Heart right ventricle (tissue), 16 donors: ENCODE measurements at regions of chr22 and their contacts with region 1.

Region 1: DNA sequence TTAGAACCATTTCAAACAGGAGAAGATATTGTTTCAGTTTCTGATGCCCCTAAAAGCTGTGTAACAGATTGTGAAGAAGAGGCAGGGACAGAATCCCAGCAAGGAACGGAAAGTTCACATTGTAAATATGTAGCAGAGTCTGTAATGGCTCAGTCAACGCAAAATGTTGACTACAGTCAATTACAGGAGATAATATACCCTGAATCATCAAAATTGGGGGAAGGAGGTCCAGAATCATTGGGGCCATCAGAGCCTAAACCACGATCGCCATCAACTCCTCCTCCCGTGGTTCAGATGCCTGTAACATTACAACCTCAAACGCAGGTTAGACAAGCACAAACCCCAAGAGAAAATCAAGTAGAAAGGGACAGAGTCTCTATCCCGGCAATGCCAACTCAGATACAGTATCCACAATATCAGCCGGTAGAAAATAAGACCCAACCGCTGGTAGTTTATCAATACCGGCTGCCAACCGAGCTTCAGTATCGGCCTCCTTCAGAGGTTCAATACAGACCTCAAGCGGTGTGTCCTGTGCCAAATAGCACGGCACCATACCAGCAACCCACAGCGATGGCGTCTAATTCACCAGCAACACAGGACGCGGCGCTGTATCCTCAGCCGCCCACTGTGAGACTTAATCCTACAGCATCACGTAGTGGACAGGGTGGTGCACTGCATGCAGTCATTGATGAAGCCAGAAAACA is 40.8 kb downstream of the IGLL1 start:
- DNase-seq: peak; percentile 69 to 78
- ATAC-seq: peak; percentile 92 to 98 (median 97)
- H3K4me3 ChIP-seq: peak overlapping the region in 2 of 10 donors; percentile 14 to 33
- H3K27ac ChIP-seq: peak overlapping the region in 1 of 10 donors; percentile 63
- H3K4me1 ChIP-seq: peaks cover 0 to 7% (median 0%) of the 10 kb centered on the region in 9 donors
- H3K27me3 ChIP-seq: peaks cover 0 to 3% (median 0%) of the 10 kb centered on the region in 7 donors
- CTCF ChIP-seq: peak; percentile 82 to 89 (median 86)

Region 2: DNA sequence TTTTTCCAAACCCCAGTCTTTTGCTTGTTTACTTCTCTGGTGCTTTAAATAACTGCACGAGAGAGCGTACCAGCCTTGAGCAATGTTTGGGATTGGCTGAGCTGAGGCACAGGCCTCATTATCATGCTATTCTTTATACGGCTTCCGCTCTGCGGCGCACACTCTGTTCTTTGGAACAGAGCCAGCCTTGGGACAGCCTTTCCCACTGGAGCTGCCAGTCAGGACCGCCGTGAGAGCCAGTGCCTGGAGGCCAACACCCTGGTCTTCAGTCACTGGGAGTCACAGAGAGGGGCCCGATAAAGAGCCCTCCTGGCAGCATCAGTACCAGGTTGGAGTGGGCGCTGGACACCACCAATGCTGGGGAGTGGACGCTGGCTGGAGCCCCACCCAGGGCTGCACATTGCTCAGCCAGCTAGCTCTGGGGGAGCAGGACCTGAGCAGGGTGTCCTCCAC is 233.3 kb before region 1 on chr22:
- intact Hi-C with region 1: loop called in 3 of 10 experiments (anchors 5 to 10 kb)
- DNase-seq: peak; percentile 63 to 78
- ATAC-seq: peak; percentile 74 to 96 (median 88)
- H3K4me3 ChIP-seq: peak overlapping the region in 1 of 10 donors; percentile 24
- H3K27ac ChIP-seq: peak overlapping the region; percentile 63 to 88 (median 78)
- H3K4me1 ChIP-seq: peaks cover 10 to 26% (median 24%) of the 10 kb centered on the region in 9 donors
- H3K27me3 ChIP-seq: no peaks in the 10 kb centered on the region
- CTCF ChIP-seq: no peak

Region 3: GRCh38 chr22:23322547-23322946 is 216.7 kb before region 1 on chr22:
- intact Hi-C with region 1: loop called in 2 of 10 experiments (anchors 10 kb)
- DNase-seq: no peak
- ATAC-seq: no peak
- H3K4me3 ChIP-seq: no peak overlapping the region
- H3K27ac ChIP-seq: no peak overlapping the region
- H3K4me1 ChIP-seq: no peaks in the 10 kb centered on the region
- H3K27me3 ChIP-seq: no peaks in the 10 kb centered on the region
- CTCF ChIP-seq: no peak

Region 4: DNA sequence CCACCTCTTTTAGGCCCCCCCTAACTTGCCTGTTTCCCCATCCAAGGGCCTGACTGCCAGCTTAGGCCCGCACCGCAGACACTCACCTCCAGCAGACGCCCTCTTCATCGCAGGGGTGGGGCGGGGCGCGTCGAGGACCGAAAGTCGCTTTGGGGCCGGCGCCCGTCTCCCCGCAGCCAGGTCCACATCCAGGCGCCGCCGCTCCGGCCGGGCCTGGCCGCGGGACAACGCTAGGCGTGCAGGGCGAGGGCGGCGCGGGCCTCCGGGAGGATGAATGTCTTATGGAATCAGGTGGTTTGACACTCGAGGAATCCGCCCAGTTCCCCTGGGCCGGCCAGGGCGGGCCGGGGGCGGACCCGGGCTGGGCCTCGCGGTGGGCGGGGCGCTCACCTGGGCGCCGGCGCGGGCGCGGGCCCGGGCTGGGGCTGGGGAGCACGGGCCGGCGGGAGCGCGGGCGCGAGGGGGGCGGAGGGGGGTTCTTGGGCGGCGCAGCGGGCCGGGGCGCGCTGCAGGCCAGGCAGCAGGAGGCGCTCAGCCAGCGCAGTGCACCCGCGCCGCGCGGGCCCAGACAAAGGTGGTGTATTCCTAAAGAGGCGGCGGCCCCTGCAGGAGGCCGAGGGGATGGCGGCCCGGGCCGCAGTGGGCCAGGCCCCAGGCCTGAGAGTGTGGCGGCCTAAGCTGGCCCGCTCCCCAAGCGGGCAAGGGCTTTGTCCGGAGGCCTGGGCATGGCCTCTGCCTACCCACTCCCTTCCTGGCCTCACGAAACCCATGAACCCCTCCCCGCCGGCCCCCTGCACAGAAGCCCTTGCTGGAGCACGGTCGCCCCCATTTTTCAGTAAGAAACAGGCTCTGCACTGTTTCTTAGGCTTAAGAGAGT is 136.8 kb before region 1 on chr22:
- intact Hi-C with region 1: loop called in 4 of 10 experiments (anchors 5 to 10 kb)
- DNase-seq: peak; percentile 26 to 44
- ATAC-seq: peak; percentile 11 to 68 (median 49)
- H3K4me3 ChIP-seq: peak overlapping the region in 9 of 10 donors; percentile 7 to 50 (median 30)
- H3K27ac ChIP-seq: no peak overlapping the region
- H3K4me1 ChIP-seq: peaks cover 0 to 6% (median 0%) of the 10 kb centered on the region in 9 donors
- H3K27me3 ChIP-seq: peaks cover 0 to 36% (median 18%) of the 10 kb centered on the region in 7 donors
- CTCF ChIP-seq: peak in 8 of 9 donors; percentile 21 to 61 (median 40)

Region 5: GRCh38 chr22:23655891-23656475 is 116.7 kb after region 1 on chr22:
- intact Hi-C with region 1: no loop called
- DNase-seq: no peak
- ATAC-seq: no peak
- H3K4me3 ChIP-seq: no peak overlapping the region
- H3K27ac ChIP-seq: no peak overlapping the region
- H3K4me1 ChIP-seq: no peaks in the 10 kb centered on the region
- H3K27me3 ChIP-seq: no peaks in the 10 kb centered on the region
- CTCF ChIP-seq: no peak

Region 6: DNA sequence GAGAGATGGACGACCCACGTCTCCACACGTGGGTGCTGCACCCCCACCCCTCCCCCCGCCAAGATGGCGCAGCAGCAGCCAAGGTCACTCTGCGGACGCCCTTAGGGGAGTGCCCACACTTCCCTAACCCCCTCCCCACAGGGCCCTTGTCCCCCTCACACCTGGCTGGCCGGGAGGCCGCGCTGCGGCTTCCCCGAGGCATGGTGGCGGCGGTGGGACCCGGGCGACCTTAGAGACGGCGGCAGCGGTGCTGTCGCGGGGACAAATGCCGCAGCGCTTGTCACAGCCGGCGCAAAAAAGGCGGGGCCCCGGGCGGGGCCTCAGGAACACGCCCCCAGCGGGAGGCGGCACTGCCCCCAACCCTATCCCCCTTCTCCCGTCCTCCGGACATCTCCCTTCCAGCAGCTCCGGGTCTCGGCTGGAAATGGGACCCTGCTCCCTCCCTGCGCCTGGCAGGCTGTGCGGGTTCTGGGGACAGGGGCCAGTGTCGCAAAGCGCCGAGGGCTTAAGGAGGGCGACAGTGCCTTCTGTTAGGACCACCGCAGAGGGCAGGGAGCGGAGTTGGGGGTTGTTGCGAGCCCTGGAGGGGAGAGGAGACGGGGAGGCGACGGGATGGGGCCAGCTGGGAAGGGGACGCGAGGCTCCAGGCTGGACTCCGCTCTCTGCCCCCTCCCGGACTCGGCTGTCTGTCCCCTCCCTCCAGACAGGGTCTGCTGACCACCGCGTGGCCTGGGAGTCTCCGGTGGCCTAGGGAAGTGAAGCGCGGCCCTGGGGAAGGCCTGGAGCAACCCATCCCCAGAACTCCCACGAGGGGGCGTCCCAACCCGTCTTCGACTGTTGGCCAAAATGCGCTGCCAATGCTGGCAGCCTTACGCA is 228.6 kb after region 1 on chr22 and contains the start of gene CHCHD10:
- intact Hi-C with region 1: loop called in 2 of 10 experiments (anchors 10 kb)
- DNase-seq: peak; percentile 89
- ATAC-seq: peak; percentile 81 to 92 (median 88)
- H3K4me3 ChIP-seq: peak within 1 kb of the TSS; percentile 58 to 78 (median 70)
- H3K27ac ChIP-seq: peak within 1 kb of the TSS; percentile 85 to 96 (median 92)
- H3K4me1 ChIP-seq: peaks cover 11 to 68% (median 55%) of the 10 kb centered on the region in 9 donors
- H3K27me3 ChIP-seq: peaks cover 0 to under 1% (median 0%) of the 10 kb centered on the region in 7 donors
- CTCF ChIP-seq: peak; percentile 75 to 91 (median 87)
- total RNA-seq, gene CHCHD10: 860 to 1,727 (median 1,056) TPM